Ascending aorta (tissue), 2 donors: ENCODE measurements at regions of chr6 and their contacts with region 1.

Region 1: DNA sequence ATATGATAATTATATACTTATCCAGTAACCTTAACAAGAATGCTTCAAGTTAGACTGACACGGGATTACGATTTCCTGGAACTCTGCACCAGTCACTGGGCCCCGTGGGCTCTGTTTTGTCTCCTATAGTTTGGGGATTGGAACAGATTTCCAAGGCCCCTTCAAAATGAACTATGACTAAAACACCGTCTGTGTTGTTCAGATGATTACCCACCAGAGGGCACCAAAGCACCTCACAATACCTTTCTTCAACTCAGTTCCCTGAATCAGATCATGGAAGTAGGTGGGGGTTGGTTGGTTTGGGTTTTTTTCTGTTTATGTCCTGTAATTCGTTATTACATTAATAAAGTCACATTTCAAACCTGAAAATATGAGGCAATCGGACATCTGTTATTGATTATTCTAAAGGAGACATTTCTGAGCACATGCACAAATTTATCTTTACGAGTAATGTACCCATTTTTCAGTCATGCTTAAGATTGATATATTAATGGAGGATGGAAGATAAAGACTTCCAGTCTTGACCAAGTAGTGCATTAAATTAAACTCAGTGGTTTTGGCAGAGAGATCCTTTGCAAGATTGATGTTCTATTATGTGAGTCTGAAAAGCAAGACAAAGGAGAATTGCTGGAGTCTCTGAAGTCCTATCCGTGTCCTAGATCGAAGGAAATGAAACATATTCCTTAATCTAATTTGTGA is 112.0 kb upstream of the COL21A1 start:
- DNase-seq: peak in 1 of 2 donors; percentile 86
- H3K4me3 ChIP-seq: no peak overlapping the region
- H3K27ac ChIP-seq: no peak overlapping the region
- H3K4me1 ChIP-seq: peaks cover 0 to under 1% of the 10 kb centered on the region in 2 donors
- H3K27me3 ChIP-seq: no peaks in the 10 kb centered on the region
- CTCF ChIP-seq: peak; percentile 78 to 82 (median 80)

Region 2: GRCh38 chr6:56299916-56300315 is 59.4 kb before region 1 on chr6:
- intact Hi-C with region 1: no loop called
- DNase-seq: no peak
- H3K4me3 ChIP-seq: no peak overlapping the region
- H3K27ac ChIP-seq: no peak overlapping the region
- H3K4me1 ChIP-seq: no peaks in the 10 kb centered on the region
- H3K27me3 ChIP-seq: no peaks in the 10 kb centered on the region
- CTCF ChIP-seq: no peak

Region 3: GRCh38 chr6:56370561-56371211 is 11.3 kb after region 1 on chr6:
- intact Hi-C with region 1: no loop called
- DNase-seq: peak in 1 of 2 donors; percentile 84
- H3K4me3 ChIP-seq: peak overlapping the region in 1 of 2 donors; percentile 51
- H3K27ac ChIP-seq: peak overlapping the region; percentile 83 to 93
- H3K4me1 ChIP-seq: peaks cover 6 to 58% of the 10 kb centered on the region in 2 donors
- H3K27me3 ChIP-seq: no peaks in the 10 kb centered on the region
- CTCF ChIP-seq: no peak

Region 4: DNA sequence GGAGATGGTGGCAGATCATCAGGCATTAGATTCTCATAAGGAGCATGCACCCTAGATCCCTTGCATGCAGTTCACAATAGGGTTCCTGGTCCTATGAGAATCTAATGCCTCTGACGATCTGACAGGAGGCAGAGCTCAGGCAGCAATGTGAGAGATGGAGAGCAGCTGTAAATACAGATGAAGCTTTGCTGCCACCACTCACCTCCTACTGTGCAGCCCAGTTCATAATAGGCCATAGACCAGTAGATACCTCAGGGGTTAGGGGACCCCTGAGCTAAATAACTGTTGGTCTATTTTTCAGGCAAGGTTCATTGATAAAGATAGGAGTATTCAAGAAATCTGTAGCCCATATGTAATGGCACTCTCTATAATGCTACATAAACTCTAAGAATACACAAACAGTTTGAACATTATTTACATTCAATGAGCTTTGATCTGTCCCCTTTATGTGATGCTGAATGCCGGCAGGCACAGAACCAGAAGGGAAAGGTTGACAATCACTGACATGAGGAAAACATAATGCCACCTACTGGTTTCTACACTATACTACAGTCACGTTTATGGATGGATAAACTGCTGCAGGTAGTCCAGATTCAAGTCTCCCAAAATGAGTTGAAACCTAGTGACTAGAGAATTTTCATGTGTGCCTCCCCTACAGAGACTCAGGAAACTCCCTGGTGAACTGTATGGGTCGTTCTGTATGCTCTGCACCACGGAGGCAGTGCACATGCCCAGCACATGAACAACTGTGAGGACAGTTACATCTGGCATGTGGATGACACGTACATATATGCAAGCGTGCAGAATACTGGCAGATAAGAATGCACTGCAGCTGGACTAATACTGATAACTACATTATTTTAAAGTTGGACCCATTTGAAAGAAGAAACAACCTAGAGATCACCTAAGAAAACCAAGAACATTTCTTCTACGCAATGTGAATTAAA is 211.3 kb after region 1 on chr6:
- intact Hi-C with region 1: loop called (anchors 5 kb)
- DNase-seq: no peak
- H3K4me3 ChIP-seq: no peak overlapping the region
- H3K27ac ChIP-seq: no peak overlapping the region
- H3K4me1 ChIP-seq: peaks cover 0 to 5% of the 10 kb centered on the region in 2 donors
- H3K27me3 ChIP-seq: no peaks in the 10 kb centered on the region
- CTCF ChIP-seq: peak; percentile 24 to 64 (median 52)

Region 5: GRCh38 chr6:56595490-56596122 is 236.3 kb after region 1 on chr6:
- intact Hi-C with region 1: loop called (anchors 1 kb)
- DNase-seq: peak in 1 of 2 donors; percentile 67
- H3K4me3 ChIP-seq: no peak overlapping the region
- H3K27ac ChIP-seq: peak overlapping the region in 1 of 2 donors; percentile 14
- H3K4me1 ChIP-seq: no peaks in the 10 kb centered on the region
- H3K27me3 ChIP-seq: no peaks in the 10 kb centered on the region
- CTCF ChIP-seq: peak; percentile 18 to 58 (median 54)